Posterior cingulate gyrus (tissue), 11 donors: ENCODE measurements at regions of chr20 and their contacts with region 1.

Region 1: DNA sequence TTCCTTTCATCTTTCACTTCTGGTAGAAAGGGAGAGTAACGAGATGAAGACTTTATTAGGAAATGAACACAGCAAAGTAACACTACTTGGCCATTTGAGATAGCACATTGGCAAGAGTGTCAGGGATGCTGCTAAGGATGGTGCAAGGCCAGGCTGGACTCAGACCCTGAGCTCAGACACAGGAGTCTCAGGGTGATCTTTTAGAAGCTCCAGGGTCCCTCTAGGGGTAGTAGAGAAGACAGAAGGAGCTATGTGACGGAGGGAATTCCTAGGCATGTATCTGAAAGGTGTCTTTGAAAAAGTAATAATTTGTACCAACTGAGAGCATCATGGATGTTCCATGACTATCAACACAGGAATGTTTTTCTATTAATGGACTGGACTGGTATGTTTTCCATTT is 436.5 kb downstream of the DHX35 start:
- DNase-seq: no peak

Region 2: GRCh38 chr20:39112178-39112743 is 286.4 kb before region 1 on chr20:
- intact Hi-C with region 1: no loop called
- DNase-seq: peak in 9 of 10 donors; percentile 14 to 91 (median 51)

Region 3: GRCh38 chr20:39358052-39358451 is 40.6 kb before region 1 on chr20:
- intact Hi-C with region 1: loop called (anchors 10 kb)
- DNase-seq: no peak